ENCODE measurements at regions of chr2 and their contacts with region 1.

Region 1: GRCh38 chr2:67854798-67855197 is 208.0 kb downstream of the C1D start:
- DNase-seq: no peak

Region 2: GRCh38 chr2:67666386-67667053 is 188.3 kb before region 1 on chr2:
- intact Hi-C with region 1: no loop called
- DNase-seq: no peak

Region 3: DNA sequence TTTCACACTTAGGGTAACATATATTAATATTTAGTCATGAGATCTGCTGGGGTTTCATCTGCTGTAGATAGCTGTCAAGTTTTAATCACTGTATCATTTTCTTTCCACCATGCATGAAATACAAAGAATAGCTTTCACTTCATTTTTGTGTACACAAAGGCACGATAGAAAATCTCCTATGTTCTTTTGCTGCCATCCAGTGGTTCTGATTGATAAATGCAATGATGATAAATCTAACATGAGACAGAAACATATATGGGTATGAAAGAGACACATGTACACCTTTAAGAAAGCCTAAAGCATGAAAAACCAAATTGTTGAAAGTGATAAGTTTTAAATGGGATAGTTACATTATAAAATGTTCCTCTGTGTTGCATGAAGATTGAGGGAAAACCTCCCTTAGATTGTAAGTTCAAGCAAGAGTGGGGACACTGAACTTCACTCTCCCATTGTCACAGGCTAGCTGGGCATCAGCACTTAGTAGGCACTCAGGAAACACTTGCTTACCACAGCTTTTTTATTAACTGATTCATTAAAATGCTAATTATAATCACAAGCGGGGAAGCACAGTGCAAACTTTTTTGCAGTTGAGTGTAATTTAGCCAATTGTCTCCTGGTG is 176.9 kb after region 1 on chr2:
- intact Hi-C with region 1: loop called (anchors 10 kb)
- DNase-seq: no peak